Endothelial cell of umbilical vein (primary cell): ENCODE measurements at regions of chr15 and their contacts with region 1.

Region 1: DNA sequence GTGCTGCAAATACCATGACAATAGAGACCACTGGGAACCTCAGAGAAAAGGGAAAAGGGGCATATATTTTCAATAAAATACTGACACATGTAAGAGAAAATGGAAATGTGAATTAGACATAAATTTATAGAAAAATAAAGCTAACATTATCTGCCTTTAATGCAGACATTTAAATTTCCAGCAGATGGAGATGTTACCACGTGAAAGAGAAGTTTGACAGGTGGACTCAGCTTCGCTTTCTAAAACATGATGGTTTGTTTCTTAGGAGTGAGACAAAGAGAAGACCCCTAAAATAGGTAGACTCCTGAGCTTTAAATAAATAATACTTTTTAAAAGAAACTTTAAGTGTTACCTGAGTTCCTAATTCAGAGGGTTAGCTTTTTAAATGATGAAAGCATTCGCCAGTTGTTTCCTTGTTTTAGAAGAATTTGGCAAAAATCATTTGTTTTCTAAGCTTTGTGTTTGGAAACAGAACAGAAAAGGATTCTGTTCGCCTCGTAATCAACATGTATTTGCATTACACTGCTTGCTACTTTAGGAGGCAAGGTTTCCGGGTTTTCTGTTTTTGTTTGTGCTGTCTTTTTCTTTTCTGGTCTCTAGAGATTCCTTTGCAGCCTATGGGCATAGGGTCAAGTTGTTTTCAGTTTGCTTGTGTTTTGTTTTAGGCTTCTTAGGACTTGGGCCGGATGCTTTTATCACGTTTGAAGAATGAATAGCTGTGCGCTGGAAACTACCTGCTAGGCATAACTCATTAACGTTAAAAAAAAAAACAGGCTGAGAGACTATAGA is 271.4 kb downstream of the THSD4 start:
- DNase-seq: peak; percentile 44
- H3K4me3 ChIP-seq: no peak overlapping the region
- H3K27ac ChIP-seq: no peak overlapping the region
- H3K4me1 ChIP-seq: peaks cover 11% of the 10 kb centered on the region
- H3K27me3 ChIP-seq: no peaks in the 10 kb centered on the region
- CTCF ChIP-seq: peak; percentile 11 to 12
- POLR2A ChIP-seq: no peak

Region 2: DNA sequence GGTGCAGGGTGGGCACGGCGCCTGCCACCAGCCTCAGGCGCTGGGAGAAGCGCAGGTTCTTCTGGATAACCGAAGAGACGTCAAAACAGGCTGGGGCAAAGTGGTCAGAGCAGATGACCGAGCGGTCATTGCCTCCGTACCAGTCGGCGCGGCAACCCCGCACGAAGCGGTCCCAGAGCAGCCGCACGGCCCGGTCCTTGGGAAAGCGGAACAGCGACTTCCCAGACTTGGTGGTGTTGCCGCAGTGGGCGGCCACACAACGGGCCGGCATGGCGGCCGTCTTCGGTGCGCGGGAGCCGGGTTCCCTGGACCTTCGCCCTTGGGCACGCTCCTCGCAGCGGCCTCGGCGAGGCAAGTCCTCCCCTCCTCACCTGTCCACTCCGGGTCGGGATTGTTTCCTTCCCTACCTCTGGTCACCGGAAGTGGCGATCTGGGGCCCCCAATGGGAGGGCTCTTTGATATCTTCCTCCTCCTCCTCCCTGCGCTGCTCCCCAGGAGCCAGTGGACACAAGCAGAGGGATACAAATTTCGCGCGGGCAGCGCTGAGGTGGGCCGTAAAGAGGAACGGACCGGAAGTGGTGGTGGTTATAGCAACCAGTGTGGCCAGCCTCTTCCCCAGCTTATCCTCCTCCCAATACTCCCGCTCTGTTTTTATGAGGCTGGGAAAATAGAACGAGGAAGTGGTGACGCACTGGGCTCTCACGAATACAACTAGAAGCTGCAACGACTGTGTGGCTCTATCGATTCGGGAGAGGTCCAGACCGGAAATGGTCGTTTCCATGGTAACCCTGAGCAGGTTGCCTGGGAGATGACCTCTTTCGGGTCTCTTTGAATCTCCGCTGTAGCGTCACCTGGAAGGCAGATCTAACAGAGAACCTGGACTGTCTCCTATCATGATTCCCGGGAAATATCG is 494.4 kb before region 1 on chr15 and contains the starts of genes LRRC49 and THAP10:
- CTCF ChIA-PET with region 1: interaction called, 4 read pairs
- POLR2A ChIA-PET with region 1: no interaction called
- dilution Hi-C with region 1: no loop called
- intact Hi-C with region 1: loop called (anchors 10 kb)
- DNase-seq: peak; percentile 98
- H3K4me3 ChIP-seq: peak within 1 kb of the TSS; percentile 47 to 81 (median 69)
- H3K27ac ChIP-seq: peak within 1 kb of the TSS; percentile 86
- H3K4me1 ChIP-seq: peaks cover 17% of the 10 kb centered on the region
- H3K27me3 ChIP-seq: no peaks in the 10 kb centered on the region
- CTCF ChIP-seq: no peak
- POLR2A ChIP-seq: no peak
- total RNA-seq, gene LRRC49: 6.6 and 7.4 TPM in 2 replicates
- total RNA-seq, gene THAP10: 2.7 and 4.0 TPM in 2 replicates

Region 3: GRCh38 chr15:71397377-71397776 is 10.7 kb after region 1 on chr15:
- CTCF ChIA-PET with region 1: interaction called, 10 read pairs
- POLR2A ChIA-PET with region 1: no interaction called
- dilution Hi-C with region 1: no loop called
- intact Hi-C with region 1: no loop called
- DNase-seq: no peak
- H3K4me3 ChIP-seq: no peak overlapping the region
- H3K27ac ChIP-seq: no peak overlapping the region
- H3K4me1 ChIP-seq: no peaks in the 10 kb centered on the region
- H3K27me3 ChIP-seq: no peaks in the 10 kb centered on the region
- CTCF ChIP-seq: no peak
- POLR2A ChIP-seq: no peak

Region 4: DNA sequence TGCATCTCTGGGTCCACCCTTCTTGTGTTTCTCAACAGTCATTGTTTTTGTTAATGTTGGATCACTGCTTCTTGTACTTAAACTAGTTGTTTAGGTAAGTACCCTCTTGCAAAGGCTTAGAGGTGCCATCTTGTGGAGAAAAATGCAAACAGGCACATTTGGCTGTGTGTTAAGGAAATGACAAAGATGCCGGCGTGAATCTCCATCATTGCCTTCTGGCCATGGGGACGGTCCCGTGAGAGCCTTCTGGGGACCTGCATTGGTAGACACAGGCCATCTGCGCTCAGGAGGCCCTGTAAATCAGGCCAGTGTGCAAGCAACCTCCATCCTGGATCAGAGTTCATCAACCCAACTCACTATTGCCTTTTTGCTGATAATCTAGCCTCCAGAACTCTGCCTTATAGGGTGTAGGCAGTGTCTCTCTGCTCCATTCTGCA is 265.1 kb after region 1 on chr15:
- CTCF ChIA-PET with region 1: no interaction called
- POLR2A ChIA-PET with region 1: no interaction called
- dilution Hi-C with region 1: no loop called
- intact Hi-C with region 1: loop called (anchors 2 kb)
- DNase-seq: peak; percentile 64
- H3K4me3 ChIP-seq: no peak overlapping the region
- H3K27ac ChIP-seq: no peak overlapping the region
- H3K4me1 ChIP-seq: peaks cover 15% of the 10 kb centered on the region
- H3K27me3 ChIP-seq: peaks cover 0 to 2% of the 10 kb centered on the region in 2 experiments
- CTCF ChIP-seq: peak; percentile 38 to 43
- POLR2A ChIP-seq: no peak

Region 5: DNA sequence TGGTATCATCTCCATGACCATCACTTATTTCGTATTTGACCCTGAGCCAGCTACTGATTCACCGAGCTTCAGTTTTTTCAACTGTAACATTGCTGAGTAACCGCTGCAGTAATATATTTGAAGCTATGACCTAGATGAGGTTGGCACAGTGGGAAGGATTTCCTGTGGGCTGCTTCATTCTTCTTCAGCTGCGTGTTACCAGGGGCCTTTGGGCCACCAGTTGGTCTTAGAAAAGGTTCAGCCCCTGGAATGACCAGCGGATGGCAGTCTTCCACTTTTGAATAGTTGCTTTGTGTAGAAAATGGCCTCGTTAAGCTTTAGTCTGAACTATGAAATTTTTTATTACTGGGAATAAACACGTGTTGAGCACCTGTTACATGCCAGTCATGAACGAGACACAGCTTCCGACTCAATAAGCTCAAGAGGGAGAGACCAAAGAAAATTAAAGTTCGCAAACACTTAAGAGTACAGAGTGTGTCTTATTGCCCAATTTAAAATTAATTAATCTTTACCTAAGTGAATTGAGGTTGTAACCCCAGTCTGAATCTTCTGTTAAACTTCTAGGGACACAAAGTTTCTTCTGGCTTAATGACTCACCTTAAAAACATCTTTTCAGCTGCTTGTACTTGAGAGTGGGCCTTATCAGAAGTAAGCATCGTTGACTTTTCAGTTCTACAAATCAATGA is 366.1 kb after region 1 on chr15:
- CTCF ChIA-PET with region 1: interaction called, 6 read pairs
- POLR2A ChIA-PET with region 1: no interaction called
- dilution Hi-C with region 1: no loop called
- intact Hi-C with region 1: loop called (anchors 2 kb)
- DNase-seq: peak; percentile 92
- H3K4me3 ChIP-seq: no peak overlapping the region
- H3K27ac ChIP-seq: peak overlapping the region; percentile 54
- H3K4me1 ChIP-seq: peaks cover 47% of the 10 kb centered on the region
- H3K27me3 ChIP-seq: no peaks in the 10 kb centered on the region
- CTCF ChIP-seq: peak; percentile 71 to 83
- POLR2A ChIP-seq: no peak